ENCODE measurements at regions of chr2 and their contacts with region 1.

Region 1: DNA sequence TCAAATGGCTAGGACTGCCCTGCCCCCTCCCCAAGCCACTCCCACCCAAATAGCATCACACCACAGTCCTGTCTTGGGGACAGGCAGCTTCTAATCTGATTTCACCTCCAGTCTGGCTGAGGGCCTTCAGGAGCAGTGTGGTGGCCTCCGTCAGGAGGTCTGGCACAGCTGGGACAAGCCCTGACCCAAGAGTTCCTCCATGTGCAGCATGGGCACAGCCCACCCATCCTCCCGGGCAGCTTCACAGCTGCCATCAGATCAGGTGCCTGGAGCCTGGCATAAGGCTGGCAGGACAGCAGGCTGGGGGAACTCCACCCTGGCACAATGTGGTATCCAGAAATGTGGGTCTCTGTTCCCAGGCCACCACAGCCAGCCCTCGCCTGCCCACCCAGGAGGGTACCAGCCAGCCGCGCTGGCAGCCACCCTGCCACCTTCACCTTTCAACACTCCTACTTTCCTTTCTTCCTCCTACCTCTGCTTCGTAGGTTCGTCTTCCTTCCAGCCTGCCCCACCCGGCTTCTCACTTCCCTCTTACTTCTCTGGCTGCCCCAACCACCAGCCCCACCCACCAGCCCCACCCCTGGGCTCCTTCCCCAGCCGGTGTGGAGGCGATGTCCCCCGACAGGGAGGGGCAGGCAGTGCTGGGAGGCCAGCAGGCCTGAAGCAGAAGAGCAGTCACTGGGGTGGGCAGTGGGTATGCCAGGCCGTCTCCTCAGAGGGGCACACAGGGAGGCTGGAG is at the start of gene CAPG:
- DNase-seq: peak in 3 of 9 donors; percentile 27 to 59 (median 29)
- ATAC-seq: peak; percentile 60
- H3K4me3 ChIP-seq: peak within 1 kb of the TSS; percentile 63
- H3K4me3 Mint-ChIP-seq: peak within 1 kb of the TSS; percentile 66 to 94 (median 78)
- H3K27ac ChIP-seq: peak within 1 kb of the TSS; percentile 41
- H3K27ac Mint-ChIP-seq: peak within 1 kb of the TSS; percentile 33 to 81 (median 76)
- H3K4me1 ChIP-seq: peaks cover 30 to 55% of the 10 kb centered on the region in 2 donors
- H3K4me1 Mint-ChIP-seq: peaks cover 32 to 78% (median 56%) of the 10 kb centered on the region in 7 donors
- H3K27me3 ChIP-seq: no peaks in the 10 kb centered on the region
- H3K27me3 Mint-ChIP-seq: peaks cover 0 to 15% (median 0%) of the 10 kb centered on the region in 5 donors
- total RNA-seq, gene CAPG: 12.9 to 265 (median 29.7) TPM

Region 2: GRCh38 chr2:85390941-85391669 is 18.9 kb before region 1 on chr2:
- CTCF ChIA-PET with region 1: interaction called, 3 read pairs
- POLR2A ChIA-PET with region 1: interaction called, 3 read pairs
- intact Hi-C with region 1: loop called (anchors 2 kb)
- DNase-seq: peak; percentile 52 to 79 (median 71)
- ATAC-seq: peak; percentile 76
- H3K4me3 ChIP-seq: no peak overlapping the region
- H3K4me3 Mint-ChIP-seq: no peak overlapping the region
- H3K27ac ChIP-seq: no peak overlapping the region
- H3K27ac Mint-ChIP-seq: peak overlapping the region in 5 of 9 donors; percentile 9 to 65 (median 38)
- H3K4me1 ChIP-seq: peaks cover 0 to 11% of the 10 kb centered on the region in 2 donors
- H3K4me1 Mint-ChIP-seq: peaks cover 5 to 27% (median 15%) of the 10 kb centered on the region in 7 donors
- H3K27me3 ChIP-seq: no peaks in the 10 kb centered on the region
- H3K27me3 Mint-ChIP-seq: no peaks in the 10 kb centered on the region